ENCODE measurements at regions of chr5 and their contacts with region 1.

Region 1: GRCh38 chr5:158770506-158770905 is 329.2 kb downstream of the EBF1 start:
- DNase-seq: no peak
- H3K4me3 ChIP-seq: no peak overlapping the region
- H3K27ac ChIP-seq: no peak overlapping the region
- H3K4me1 ChIP-seq: peaks cover 10% of the 10 kb centered on the region
- H3K27me3 ChIP-seq: no peaks in the 10 kb centered on the region
- CTCF ChIP-seq: no peak
- EP300 ChIP-seq: no peak
- POLR2A ChIP-seq: no peak

Region 2: DNA sequence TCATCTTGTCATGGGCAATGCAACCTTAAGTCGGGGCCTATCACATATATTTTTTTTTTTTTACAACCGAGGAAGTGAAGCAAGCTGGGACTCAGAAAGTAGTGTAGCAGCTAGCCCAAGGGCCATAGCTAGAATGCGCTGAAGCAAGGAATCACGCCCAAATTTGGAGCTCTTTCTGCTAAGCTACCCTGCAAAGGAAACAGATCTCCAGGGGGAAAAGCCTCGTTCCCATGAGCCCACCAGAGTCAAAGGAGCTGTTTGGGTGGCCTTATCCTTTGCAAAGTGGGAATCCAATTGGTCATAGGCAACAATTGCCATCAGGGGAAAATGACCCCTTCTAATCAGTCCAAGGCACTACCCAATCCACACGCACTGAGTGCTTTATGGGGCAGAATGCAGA is 61.2 kb before region 1 on chr5:
- intact Hi-C with region 1: loop called in 1 of 4 experiments (anchors 2 kb)
- DNase-seq: no peak
- H3K4me3 ChIP-seq: no peak overlapping the region
- H3K27ac ChIP-seq: no peak overlapping the region
- H3K4me1 ChIP-seq: no peaks in the 10 kb centered on the region
- H3K27me3 ChIP-seq: no peaks in the 10 kb centered on the region
- CTCF ChIP-seq: no peak
- EP300 ChIP-seq: no peak
- POLR2A ChIP-seq: no peak

Region 3: DNA sequence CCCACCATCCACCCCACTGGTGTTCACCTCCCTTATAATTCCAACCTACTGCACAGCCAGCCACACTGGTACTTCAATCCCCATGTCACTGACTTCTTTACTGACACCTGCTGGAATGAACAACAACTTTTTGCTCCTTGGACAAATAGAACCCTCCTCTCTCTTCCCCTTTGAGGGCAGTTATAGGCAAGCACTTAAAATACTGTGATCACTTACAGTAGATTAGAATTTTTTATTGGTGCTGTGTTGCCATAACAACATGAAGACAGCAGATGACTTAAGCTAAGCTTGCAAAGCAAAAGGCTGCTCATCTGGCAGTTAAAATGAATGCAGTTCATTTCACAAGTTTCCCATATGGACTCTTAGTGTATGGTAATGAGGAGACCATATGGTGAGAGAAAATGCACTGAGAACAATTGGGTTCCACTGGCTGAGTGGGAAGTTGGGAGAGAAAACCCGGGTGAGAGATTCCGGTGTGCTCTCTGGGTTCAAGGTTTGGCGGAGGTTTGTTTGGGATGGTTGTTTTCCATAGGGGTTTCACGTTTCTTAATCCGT is 45.1 kb before region 1 on chr5:
- intact Hi-C with region 1: loop called in 1 of 4 experiments (anchors 10 kb)
- DNase-seq: no peak
- H3K4me3 ChIP-seq: no peak overlapping the region
- H3K27ac ChIP-seq: no peak overlapping the region
- H3K4me1 ChIP-seq: peaks cover 12% of the 10 kb centered on the region
- H3K27me3 ChIP-seq: no peaks in the 10 kb centered on the region
- CTCF ChIP-seq: no peak
- EP300 ChIP-seq: no peak
- POLR2A ChIP-seq: no peak